HEK293 (cell line): ENCODE measurements at regions of chr18 and their contacts with region 1.

Region 1: DNA sequence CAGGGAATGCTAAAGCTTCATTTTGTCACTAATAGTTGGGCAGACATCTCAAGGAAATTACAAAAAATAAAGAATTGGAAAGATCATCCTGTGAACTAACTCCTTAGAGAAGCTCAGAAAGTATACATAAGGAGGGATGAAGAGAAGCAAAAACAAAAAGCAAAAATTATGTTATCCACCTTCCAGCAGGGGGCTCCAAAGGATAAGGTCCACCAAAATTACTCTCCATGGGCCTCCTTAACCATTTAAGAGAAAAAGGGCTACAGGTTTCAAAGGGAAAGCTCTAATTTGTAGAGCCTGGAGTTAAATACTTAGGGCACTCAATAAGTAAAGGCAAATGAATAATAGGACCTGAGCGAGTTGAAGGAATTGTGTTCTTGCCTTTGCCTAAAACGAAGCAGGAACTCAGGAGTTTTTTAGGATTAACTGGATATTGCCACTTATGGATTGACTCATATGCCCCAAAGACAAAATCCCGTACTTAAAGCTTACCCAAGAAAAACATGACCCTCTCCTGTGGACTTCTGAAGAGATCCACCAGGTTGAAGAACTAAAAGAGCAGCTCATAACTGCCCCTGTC is 1167.9 kb downstream of the DSC3 start:
- H3K4me3 ChIP-seq: no peak overlapping the region
- H3K27ac ChIP-seq: no peak overlapping the region
- H3K4me1 ChIP-seq: no peaks in the 10 kb centered on the region
- CTCF ChIP-seq: 0 out of 2 replicates have a peak, but pooled peaks have one; percentile 26

Region 2: GRCh38 chr18:29629493-29630042 is 245.0 kb before region 1 on chr18:
- CTCF ChIA-PET with region 1: no interaction called
- POLR2A ChIA-PET with region 1: no interaction called
- H3K4me3 ChIP-seq: no peak overlapping the region
- H3K27ac ChIP-seq: no peak overlapping the region
- H3K4me1 ChIP-seq: no peaks in the 10 kb centered on the region
- CTCF ChIP-seq: no peak

Region 3: DNA sequence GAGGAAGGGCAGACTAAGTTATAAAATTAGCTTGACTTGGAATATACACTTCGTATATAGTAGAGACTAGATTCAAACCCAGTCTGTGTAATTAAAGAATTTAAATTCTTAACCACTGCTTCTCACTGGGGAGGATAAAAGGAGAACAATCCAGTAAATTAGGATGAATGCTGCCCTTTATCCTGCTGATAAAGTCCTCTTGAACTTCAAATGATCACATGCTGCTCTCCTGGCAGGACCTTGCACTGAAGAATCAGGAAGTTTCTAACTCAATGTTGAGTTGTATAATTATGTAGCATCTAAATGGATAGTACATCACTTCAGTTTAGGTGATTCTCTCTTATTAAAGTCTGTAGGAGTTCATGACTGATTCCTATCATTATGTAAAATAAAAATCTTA is 11.8 kb before region 1 on chr18:
- CTCF ChIA-PET with region 1: interaction called, 17 read pairs
- POLR2A ChIA-PET with region 1: no interaction called
- H3K4me3 ChIP-seq: no peak overlapping the region
- H3K27ac ChIP-seq: no peak overlapping the region
- H3K4me1 ChIP-seq: no peaks in the 10 kb centered on the region
- CTCF ChIP-seq: no peak

Region 4: DNA sequence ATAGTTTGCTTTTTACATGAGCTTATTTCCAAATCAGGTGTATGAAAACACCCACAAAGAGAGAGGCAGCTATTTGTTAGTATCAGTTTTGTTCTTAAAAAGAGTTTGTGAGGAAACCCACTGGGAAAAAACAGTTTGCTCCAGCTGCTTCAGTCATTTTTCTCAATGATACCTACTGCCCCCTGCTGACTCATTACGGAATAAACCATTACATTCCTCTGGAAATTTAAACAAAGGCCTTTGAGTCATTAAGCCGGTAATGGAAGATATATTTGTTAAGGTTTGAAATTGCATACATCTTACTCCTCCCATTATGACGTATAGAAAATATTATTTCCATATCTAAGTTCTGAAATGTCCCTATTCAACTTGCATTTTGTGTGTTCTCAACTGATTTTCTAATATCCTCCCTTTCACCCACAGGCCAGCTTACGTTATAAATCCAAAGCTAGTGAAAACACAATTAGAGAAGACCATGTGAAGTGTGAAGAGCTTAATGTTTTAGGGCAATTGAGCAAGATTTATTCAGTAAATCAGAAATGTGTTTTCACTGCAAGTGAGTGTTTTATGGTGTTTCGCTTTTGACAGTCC is 406.4 kb after region 1 on chr18:
- CTCF ChIA-PET with region 1: interaction called, 38 read pairs
- POLR2A ChIA-PET with region 1: no interaction called
- H3K4me3 ChIP-seq: no peak overlapping the region
- H3K27ac ChIP-seq: no peak overlapping the region
- H3K4me1 ChIP-seq: no peaks in the 10 kb centered on the region
- CTCF ChIP-seq: no peak

Region 5: GRCh38 chr18:30889519-30890301 is 1015.1 kb after region 1 on chr18:
- CTCF ChIA-PET with region 1: interaction called, 17 read pairs
- POLR2A ChIA-PET with region 1: no interaction called
- H3K4me3 ChIP-seq: no peak overlapping the region
- H3K27ac ChIP-seq: no peak overlapping the region
- H3K4me1 ChIP-seq: no peaks in the 10 kb centered on the region
- CTCF ChIP-seq: peak; percentile 47; the same call in 1 of the 2 replicates